ENCODE measurements at regions of chr19 and their contacts with region 1.

Region 1: GRCh38 chr19:46704379-46705076 is 12.4 kb downstream of the PRKD2 start:
- DNase-seq: peak; percentile 80 to 96 (median 84)
- ATAC-seq: peak; percentile 99
- H3K4me3 ChIP-seq: no peak overlapping the region
- H3K4me3 Mint-ChIP-seq: no peak overlapping the region
- H3K27ac ChIP-seq: no peak overlapping the region
- H3K27ac Mint-ChIP-seq: peak overlapping the region; percentile 64
- H3K4me1 ChIP-seq: peaks cover 10% of the 10 kb centered on the region
- H3K4me1 Mint-ChIP-seq: peaks cover 12% of the 10 kb centered on the region
- H3K27me3 ChIP-seq: no peaks in the 10 kb centered on the region
- H3K27me3 Mint-ChIP-seq: no peaks in the 10 kb centered on the region
- CTCF ChIP-seq: peak; percentile 87

Region 2: GRCh38 chr19:46687438-46688145 is 16.9 kb before region 1 on chr19:
- CTCF ChIA-PET with region 1: interaction called, 26 read pairs
- POLR2A ChIA-PET with region 1: interaction called, 4 read pairs
- intact Hi-C with region 1: no loop called
- DNase-seq: no peak
- ATAC-seq: no peak
- H3K4me3 ChIP-seq: no peak overlapping the region
- H3K4me3 Mint-ChIP-seq: no peak overlapping the region
- H3K27ac ChIP-seq: no peak overlapping the region
- H3K27ac Mint-ChIP-seq: no peak overlapping the region
- H3K4me1 ChIP-seq: no peaks in the 10 kb centered on the region
- H3K4me1 Mint-ChIP-seq: peaks cover 4% of the 10 kb centered on the region
- H3K27me3 ChIP-seq: no peaks in the 10 kb centered on the region
- H3K27me3 Mint-ChIP-seq: no peaks in the 10 kb centered on the region
- CTCF ChIP-seq: no peak

Region 3: DNA sequence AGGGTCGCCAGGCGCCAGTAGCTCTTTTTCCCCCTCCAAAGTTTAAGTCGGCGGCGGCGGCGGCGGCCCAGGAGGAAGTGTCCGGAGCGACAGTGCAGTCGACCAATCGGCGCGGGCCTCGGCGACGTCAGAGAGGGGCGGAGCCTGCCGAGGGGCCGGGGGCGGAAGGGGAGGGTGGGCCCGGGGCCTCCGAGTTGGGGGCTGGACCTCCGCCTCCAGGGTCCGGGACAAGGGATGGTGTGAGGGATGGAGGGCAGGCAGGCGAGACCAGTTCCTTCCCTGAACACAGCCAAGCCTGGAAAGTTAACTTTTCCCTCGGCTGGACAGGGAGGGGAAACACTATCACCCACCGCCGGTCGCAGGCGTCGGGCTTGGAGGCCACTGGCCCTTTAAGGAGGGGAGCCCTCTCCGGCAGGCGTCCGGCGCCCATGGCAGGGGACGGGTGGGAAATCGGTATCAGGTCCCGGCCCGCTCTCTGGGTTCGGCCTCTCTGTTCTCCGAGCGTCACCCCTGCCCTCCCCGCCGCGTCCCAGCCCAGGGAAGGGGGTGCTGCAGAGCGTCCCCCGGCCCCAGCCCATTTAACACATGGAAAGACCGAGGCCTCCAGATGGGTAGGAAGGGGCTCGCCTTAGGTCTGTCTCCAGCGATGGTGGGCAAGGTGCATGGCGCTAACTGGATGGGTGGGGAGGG is 12.7 kb after region 1 on chr19 and contains the start of gene PRKD2:
- CTCF ChIA-PET with region 1: interaction called, 40 read pairs
- POLR2A ChIA-PET with region 1: interaction called, 9 read pairs
- intact Hi-C with region 1: loop called in 1 of 2 experiments (anchors 1 kb)
- DNase-seq: peak; percentile 60 to 91 (median 86)
- ATAC-seq: peak; percentile 51
- H3K4me3 ChIP-seq: peak within 1 kb of the TSS; percentile 71 to 73
- H3K4me3 Mint-ChIP-seq: peak within 1 kb of the TSS; percentile 92
- H3K27ac ChIP-seq: peak within 1 kb of the TSS; percentile 77 to 94
- H3K27ac Mint-ChIP-seq: peak within 1 kb of the TSS; percentile 99
- H3K4me1 ChIP-seq: peaks cover 37% of the 10 kb centered on the region
- H3K4me1 Mint-ChIP-seq: peaks cover 45% of the 10 kb centered on the region
- H3K27me3 ChIP-seq: no peaks in the 10 kb centered on the region
- H3K27me3 Mint-ChIP-seq: no peaks in the 10 kb centered on the region
- CTCF ChIP-seq: no peak
- total RNA-seq, gene PRKD2: 81.1 to 89.7 TPM

Region 4: DNA sequence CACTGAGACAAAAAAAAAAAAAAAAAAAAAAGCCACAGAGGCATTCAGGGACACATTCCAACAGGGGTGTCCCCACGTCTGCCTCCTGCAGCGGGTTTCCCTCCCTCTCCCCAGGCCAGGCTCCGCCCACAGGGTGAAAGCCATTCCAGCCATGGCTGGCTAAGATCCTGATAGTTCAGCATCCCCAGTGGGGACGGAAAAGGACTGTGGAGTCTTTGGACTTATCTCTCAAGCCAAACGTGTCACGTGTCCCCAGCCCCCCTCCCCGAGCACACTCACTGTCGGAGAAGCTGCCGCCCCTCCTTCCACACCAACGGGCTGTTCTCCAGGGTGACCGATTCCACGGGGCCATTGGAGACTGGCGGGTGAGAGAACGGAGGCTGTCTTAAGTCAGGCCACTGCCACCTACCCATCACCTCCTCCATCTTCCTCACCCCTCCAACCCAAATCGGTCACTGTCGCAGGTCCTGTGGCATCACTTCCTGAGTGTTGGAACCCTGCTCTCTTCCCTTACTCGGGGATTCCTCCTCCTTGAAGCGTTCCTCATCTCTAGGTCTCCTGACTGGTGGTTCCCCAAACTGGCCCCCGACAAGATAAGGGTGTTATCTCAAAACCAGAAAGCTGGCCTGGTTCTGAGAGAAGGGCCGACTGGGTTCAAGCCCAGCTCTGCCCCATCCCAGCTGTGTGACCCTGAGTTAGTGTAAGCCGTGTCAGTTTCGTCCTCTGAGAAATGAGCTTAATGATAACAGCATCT is 32.2 kb after region 1 on chr19:
- CTCF ChIA-PET with region 1: interaction called, 269 read pairs
- POLR2A ChIA-PET with region 1: interaction called, 8 read pairs
- intact Hi-C with region 1: no loop called
- DNase-seq: no peak
- ATAC-seq: no peak
- H3K4me3 ChIP-seq: no peak overlapping the region
- H3K4me3 Mint-ChIP-seq: no peak overlapping the region
- H3K27ac ChIP-seq: no peak overlapping the region
- H3K27ac Mint-ChIP-seq: no peak overlapping the region
- H3K4me1 ChIP-seq: peaks cover 1% of the 10 kb centered on the region
- H3K4me1 Mint-ChIP-seq: peaks cover 17% of the 10 kb centered on the region
- H3K27me3 ChIP-seq: no peaks in the 10 kb centered on the region
- H3K27me3 Mint-ChIP-seq: no peaks in the 10 kb centered on the region
- CTCF ChIP-seq: no peak

Region 5: GRCh38 chr19:46753420-46754155 is 49.1 kb after region 1 on chr19:
- CTCF ChIA-PET with region 1: interaction called, 20 read pairs
- POLR2A ChIA-PET with region 1: no interaction called
- intact Hi-C with region 1: loop called in 1 of 2 experiments (anchors 1 kb)
- DNase-seq: peak; percentile 51 to 82 (median 72)
- ATAC-seq: peak; percentile 95
- H3K4me3 ChIP-seq: no peak overlapping the region
- H3K4me3 Mint-ChIP-seq: no peak overlapping the region
- H3K27ac ChIP-seq: no peak overlapping the region
- H3K27ac Mint-ChIP-seq: no peak overlapping the region
- H3K4me1 ChIP-seq: no peaks in the 10 kb centered on the region
- H3K4me1 Mint-ChIP-seq: peaks cover 7% of the 10 kb centered on the region
- H3K27me3 ChIP-seq: no peaks in the 10 kb centered on the region
- H3K27me3 Mint-ChIP-seq: no peaks in the 10 kb centered on the region
- CTCF ChIP-seq: peak; percentile 55